Right cardiac atrium (tissue), 5 donors: ENCODE measurements at regions of chr1 and their contacts with region 1.

Region 1: GRCh38 chr1:116498789-116499628 is 71.8 kb downstream of the CD58 start:
- DNase-seq: peak; percentile 38 to 75 (median 71)
- ATAC-seq: peak; percentile 64 to 67
- H3K4me3 ChIP-seq: no peak overlapping the region
- H3K27ac ChIP-seq: no peak overlapping the region
- H3K4me1 ChIP-seq: peaks cover 20% of the 10 kb centered on the region
- H3K27me3 ChIP-seq: no peaks in the 10 kb centered on the region

Region 2: DNA sequence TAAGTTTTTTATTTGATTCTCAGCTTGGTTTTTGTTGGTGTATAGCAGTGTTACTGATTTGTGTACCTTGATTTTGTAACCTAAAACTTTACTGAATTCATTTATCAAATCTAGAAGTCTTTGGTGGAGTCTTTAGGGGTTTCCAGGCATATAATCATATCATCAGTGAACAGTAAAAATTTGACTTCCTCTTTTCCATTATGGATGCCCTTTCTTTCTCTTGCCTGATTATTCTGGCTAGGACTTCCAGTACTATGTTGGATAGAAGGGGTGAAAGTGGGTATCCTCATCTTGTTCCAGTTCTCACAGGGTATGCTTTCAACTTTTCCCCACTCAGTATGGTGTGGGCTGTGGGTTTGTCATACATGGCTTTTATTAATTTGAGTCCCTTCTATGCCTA is 411.4 kb before region 1 on chr1:
- intact Hi-C with region 1: no loop called
- DNase-seq: no peak
- ATAC-seq: no peak
- H3K4me3 ChIP-seq: no peak overlapping the region
- H3K27ac ChIP-seq: no peak overlapping the region
- H3K4me1 ChIP-seq: no peaks in the 10 kb centered on the region
- H3K27me3 ChIP-seq: no peaks in the 10 kb centered on the region

Region 3: GRCh38 chr1:116139592-116140134 is 359.3 kb before region 1 on chr1:
- intact Hi-C with region 1: loop called in 1 of 4 experiments (anchors 5 kb)
- DNase-seq: no peak
- ATAC-seq: no peak
- H3K4me3 ChIP-seq: no peak overlapping the region
- H3K27ac ChIP-seq: no peak overlapping the region
- H3K4me1 ChIP-seq: no peaks in the 10 kb centered on the region
- H3K27me3 ChIP-seq: no peaks in the 10 kb centered on the region

Region 4: GRCh38 chr1:116151739-116152576 is 347.1 kb before region 1 on chr1:
- intact Hi-C with region 1: loop called in 3 of 4 experiments (anchors 5 kb)
- DNase-seq: peak; percentile 81 to 91 (median 91)
- ATAC-seq: peak; percentile 96 to 98
- H3K4me3 ChIP-seq: peak overlapping the region; percentile 35
- H3K27ac ChIP-seq: no peak overlapping the region
- H3K4me1 ChIP-seq: peaks cover 5% of the 10 kb centered on the region
- H3K27me3 ChIP-seq: no peaks in the 10 kb centered on the region